A673 (cell line): ENCODE measurements at regions of chr19 and their contacts with region 1.

Region 1: DNA sequence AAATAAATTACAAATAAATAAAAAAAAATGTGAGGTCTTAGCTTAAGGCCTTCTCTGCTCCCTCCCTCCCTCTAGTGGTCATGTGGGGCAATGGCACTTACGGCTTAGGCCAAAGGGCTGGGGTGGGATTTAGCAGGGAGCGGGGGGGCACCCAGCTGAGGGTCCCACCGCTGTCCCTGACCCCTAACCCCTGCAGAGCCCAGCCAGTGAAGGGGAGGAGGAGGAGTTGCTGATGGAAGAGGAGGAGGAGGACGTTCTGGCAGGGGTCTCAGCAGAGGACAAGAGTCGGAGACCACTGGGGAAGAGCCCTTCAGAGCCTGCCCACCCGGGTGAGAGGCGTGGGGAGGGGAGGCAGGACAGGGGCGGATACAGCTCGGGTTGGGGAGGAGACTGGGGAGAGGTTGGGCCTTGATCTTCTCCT is 9.3 kb downstream of the MPND start:
- DNase-seq: peak; percentile 76
- H3K4me3 ChIP-seq: no peak overlapping the region
- H3K27ac ChIP-seq: no peak overlapping the region
- H3K4me1 ChIP-seq: no peaks in the 10 kb centered on the region
- H3K27me3 ChIP-seq: no peaks in the 10 kb centered on the region
- CTCF ChIP-seq: peak; percentile 83

Region 2: DNA sequence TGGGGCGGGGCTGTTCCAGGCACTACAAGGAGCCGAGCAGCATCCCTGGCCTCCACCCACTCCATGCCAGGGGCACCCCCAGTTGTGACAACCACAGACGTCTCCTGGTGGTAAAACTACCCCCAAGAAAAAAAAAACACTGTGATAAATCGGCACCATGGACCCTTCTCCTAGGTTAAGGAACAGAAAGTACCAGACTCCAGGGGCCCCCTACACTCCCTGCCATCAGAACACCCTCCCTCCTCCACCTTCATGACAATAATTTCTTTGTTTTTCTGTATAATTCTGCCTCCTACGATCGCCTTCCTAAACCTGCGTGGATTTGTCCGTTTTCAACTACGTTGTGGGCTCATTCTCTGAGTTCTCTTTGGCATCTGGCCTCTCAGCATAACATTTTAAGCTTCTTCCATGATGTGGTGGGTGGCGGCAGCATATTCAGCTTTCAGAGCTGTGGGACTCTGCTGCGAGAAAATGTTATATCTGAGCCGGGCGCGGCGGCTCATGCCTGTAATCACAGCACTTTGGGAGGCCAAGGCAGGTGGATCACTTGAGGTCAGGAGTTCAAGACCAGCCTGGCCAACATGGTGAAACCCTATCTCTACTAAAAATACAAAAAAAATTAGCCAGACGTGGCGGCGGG is 1332.3 kb before region 1 on chr19:
- CTCF ChIA-PET with region 1: no interaction called
- POLR2A ChIA-PET with region 1: no interaction called
- intact Hi-C with region 1: no loop called
- DNase-seq: no peak
- H3K4me3 ChIP-seq: no peak overlapping the region
- H3K27ac ChIP-seq: no peak overlapping the region
- H3K4me1 ChIP-seq: no peaks in the 10 kb centered on the region
- H3K27me3 ChIP-seq: no peaks in the 10 kb centered on the region
- CTCF ChIP-seq: no peak

Region 3: DNA sequence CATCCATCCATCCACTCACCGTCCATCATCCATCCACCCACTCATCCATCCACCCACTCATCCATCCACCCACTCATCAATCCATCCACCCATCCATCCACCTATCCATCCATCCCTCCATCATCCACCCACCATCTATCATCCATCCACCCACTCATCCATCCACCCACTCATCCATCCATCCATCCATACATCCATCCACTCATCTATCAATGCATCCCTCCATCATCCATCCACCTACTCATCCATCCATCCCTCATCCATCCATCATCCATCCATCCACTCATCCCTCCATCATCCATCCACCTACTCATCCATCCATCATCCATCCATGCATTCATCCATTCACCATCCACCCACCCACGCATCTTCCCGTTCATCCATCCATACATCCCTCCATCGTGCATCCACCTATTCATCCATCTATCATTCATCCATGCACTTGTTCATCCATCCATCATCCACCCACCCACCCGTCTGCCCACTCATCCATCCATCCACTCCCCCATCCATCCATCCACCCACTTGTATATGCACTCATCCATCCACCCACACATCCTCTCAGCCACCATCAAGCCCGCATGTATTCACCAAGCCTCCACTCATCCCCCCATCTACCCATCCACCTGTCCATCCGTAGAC is 17.7 kb before region 1 on chr19:
- CTCF ChIA-PET with region 1: no interaction called
- POLR2A ChIA-PET with region 1: no interaction called
- intact Hi-C with region 1: no loop called
- DNase-seq: no peak
- H3K4me3 ChIP-seq: no peak overlapping the region
- H3K27ac ChIP-seq: no peak overlapping the region
- H3K4me1 ChIP-seq: peaks cover 8% of the 10 kb centered on the region
- H3K27me3 ChIP-seq: no peaks in the 10 kb centered on the region
- CTCF ChIP-seq: no peak

Region 4: GRCh38 chr19:4495471-4495870 is 142.8 kb after region 1 on chr19:
- CTCF ChIA-PET with region 1: no interaction called
- POLR2A ChIA-PET with region 1: no interaction called
- intact Hi-C with region 1: no loop called
- DNase-seq: no peak
- H3K4me3 ChIP-seq: no peak overlapping the region
- H3K27ac ChIP-seq: no peak overlapping the region
- H3K4me1 ChIP-seq: no peaks in the 10 kb centered on the region
- H3K27me3 ChIP-seq: no peaks in the 10 kb centered on the region
- CTCF ChIP-seq: no peak

Region 5: DNA sequence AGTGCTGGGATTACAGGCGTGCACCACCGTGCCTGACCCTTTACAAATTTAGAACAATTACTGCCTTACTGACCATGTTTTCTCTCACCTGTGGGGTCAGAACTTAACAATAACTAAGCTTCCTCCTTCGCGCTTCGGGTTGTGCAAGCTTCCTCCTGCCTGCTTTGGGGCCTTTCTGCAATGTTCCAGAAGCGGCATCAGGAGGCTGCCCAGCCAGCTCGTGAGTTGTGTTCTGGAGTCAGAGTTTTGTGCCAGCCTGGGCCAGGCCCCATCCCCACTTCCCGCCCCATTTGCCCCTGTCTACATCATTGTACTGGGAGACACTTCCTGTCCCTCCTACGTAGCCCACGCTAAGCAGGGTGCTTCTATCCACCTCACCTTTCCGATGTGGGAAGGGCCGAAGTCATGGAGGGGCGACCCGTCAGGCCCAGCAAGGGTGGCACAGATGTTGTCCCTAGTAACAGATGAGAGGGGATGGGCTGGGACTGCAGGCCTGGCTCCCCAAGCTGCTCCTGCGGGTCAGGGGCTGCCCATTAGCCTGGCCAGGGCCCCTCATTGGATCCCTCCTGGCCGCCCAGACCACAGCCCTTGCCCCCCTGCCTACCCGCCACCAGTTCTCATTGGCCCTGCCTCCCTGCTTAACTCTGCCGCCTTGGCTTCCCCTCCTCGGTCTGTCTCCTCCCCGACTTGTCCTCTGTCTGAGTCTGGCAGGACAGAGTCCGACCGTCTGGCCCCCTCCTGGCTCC is 570.0 kb after region 1 on chr19:
- CTCF ChIA-PET with region 1: interaction called, 10 read pairs
- POLR2A ChIA-PET with region 1: no interaction called
- intact Hi-C with region 1: no loop called
- DNase-seq: no peak
- H3K4me3 ChIP-seq: no peak overlapping the region
- H3K27ac ChIP-seq: no peak overlapping the region
- H3K4me1 ChIP-seq: no peaks in the 10 kb centered on the region
- H3K27me3 ChIP-seq: no peaks in the 10 kb centered on the region
- CTCF ChIP-seq: no peak